GM13977 (cell line): ENCODE measurements at regions of chr15 and their contacts with region 1.

Region 1: GRCh38 chr15:81492331-81492963 is 118.4 kb upstream of the TMC3 start:
- DNase-seq: no peak
- CTCF ChIP-seq: no peak

Region 2: DNA sequence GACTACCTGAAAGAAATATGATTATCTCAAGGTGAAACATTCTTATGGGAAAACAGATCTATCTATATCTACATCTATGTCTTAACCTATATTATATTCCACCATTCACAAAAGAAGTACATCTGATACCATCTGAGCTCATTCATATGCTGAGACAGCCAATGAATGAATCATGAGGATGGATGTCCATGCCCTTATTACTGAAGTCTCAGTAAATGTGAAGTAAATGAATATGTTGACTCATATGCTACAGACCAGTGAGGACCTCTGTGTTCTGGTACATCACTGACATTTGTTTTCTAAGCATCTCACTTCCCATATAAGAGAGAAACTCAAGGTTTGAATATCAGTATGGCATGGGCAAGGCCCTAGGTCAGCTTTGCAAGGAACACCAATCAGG is 192.8 kb after region 1 on chr15:
- in situ Hi-C with region 1: no loop called
- DNase-seq: no peak
- CTCF ChIP-seq: no peak

Region 3: GRCh38 chr15:81939604-81940440 is 447.4 kb after region 1 on chr15:
- in situ Hi-C with region 1: loop called (anchors 10 kb)
- DNase-seq: peak; percentile 48
- CTCF ChIP-seq: peak; percentile 74